HepG2 (cell line): ENCODE measurements at regions of chr12 and their contacts with region 1.

Region 1: DNA sequence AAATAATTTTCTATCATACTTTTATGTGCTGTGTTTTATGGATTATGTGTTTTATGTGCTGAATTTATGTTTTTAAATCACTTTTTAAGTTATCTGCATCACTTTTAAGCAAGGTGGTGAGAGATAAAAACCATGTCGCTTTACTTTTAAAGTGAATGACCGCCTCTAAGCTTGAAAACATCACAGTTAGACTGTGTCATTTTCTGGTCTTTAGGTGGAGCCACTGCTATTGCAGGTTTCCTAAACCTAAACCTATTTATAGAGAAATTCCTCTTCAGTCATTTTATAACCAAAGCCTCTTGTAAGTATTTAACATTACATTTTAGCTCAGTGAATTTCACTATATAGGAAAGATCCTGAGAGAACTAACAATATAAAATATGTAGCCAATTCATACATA is 21.0 kb upstream of the MDM2 start:
- DNase-seq: peak; percentile 56
- ATAC-seq: peak; percentile 4; the same call in 2 of the 3 replicates
- H3K4me3 ChIP-seq: peak overlapping the region in 2 of 3 experiments; percentile 13 to 36; a peak in 1 of 6 replicates
- H3K27ac ChIP-seq: peak overlapping the region; percentile 91
- H3K4me1 ChIP-seq: peaks cover 85% of the 10 kb centered on the region
- H3K27me3 ChIP-seq: no peaks in the 10 kb centered on the region
- CTCF ChIP-seq: peak; percentile 39; the same call in 1 of the 2 replicates
- EP300 ChIP-seq: no peak
- POLR2A ChIP-seq: no peak
- RAD21 ChIP-seq: no peak

Region 2: GRCh38 chr12:68745904-68746571 is 40.9 kb before region 1 on chr12 and contains the start of gene SLC35E3:
- CTCF ChIA-PET with region 1: no interaction called
- POLR2A ChIA-PET with region 1: interaction called, 29 read pairs
- in situ Hi-C with region 1: no loop called
- intact Hi-C with region 1: loop called (anchors 1 kb)
- DNase-seq: peak; percentile 88
- ATAC-seq: peak; percentile 98
- H3K4me3 ChIP-seq: peak within 1 kb of the TSS; percentile 83 to 93 (median 87)
- H3K27ac ChIP-seq: peak within 1 kb of the TSS; percentile 75
- H3K4me1 ChIP-seq: peaks cover 34% of the 10 kb centered on the region
- H3K27me3 ChIP-seq: no peaks in the 10 kb centered on the region; a peak in 1 of 5 replicates
- CTCF ChIP-seq: no peak
- EP300 ChIP-seq: no peak
- POLR2A ChIP-seq: peak; percentile 74 to 96
- RAD21 ChIP-seq: no peak
- total RNA-seq, gene SLC35E3: 12.2 and 22.1 TPM in 2 replicates